Activated naive CD4-positive, alpha-beta T cell treated with anti-CD3 and anti-CD28 coated beads for 36 hours (primary cell): ENCODE measurements at regions of chrX and their contacts with region 1.

Region 1: DNA sequence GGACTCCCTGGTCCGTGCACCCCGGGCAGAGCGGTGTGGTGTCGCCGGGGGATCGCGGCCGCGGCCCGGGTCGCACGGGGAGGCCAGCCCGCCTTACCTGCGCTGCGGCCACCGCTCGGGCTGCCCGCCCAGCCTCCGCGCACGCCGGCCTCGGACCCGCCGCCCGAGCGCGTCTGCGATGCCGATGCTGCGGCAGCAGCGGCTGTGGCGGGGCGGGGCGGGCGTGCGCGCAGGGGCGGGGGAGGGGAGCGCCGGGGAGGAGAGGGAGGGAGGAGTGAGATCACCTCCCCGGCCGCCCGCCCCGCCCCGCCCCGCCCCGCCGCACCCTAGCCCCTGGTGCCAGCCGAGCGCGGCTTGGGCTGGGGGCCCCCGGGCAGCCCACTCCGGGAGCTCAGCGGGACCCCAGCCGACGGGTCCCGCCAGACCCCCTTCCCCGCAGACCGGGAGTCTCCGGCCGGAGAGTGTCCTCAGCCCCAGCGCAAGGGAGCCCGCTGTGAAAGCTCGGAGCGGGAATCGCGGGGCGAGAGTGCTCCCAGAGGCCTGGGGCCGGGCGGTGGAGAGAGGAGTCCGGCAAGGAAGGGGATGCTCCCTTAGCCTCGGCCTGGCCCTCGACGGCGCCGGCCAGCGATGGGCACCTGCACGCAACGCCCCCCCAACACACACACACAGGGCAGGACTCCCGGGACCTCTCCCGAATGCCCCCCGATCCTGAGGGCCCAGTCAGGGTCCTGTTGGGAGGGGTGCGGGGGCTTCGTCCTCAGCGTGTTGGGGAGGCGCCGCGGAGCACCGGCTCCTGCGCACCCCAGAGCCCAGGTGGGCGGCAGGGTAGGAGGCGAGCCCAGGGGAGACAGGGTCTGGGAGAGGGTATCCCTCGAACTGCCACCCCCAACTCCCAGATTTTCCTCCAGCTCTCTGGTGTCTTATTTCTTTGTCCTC is at the start of gene L1CAM:
- DNase-seq: peak; percentile 38
- H3K4me3 Mint-ChIP-seq: peak within 1 kb of the TSS; percentile 53
- H3K27ac Mint-ChIP-seq: no peak within 1 kb of the TSS
- H3K4me1 Mint-ChIP-seq: peaks cover 3% of the 10 kb centered on the region
- H3K27me3 Mint-ChIP-seq: peaks cover 8% of the 10 kb centered on the region
- total RNA-seq, gene L1CAM: 0.40 to 0.57 TPM

Region 2: GRCh38 chrX:153900831-153901752 is 14.9 kb after region 1 on chrX:
- CTCF ChIA-PET with region 1: no interaction called
- intact Hi-C with region 1: loop called (anchors 1 kb)
- DNase-seq: peak; percentile 82
- H3K4me3 Mint-ChIP-seq: peak overlapping the region; percentile 43
- H3K27ac Mint-ChIP-seq: peak overlapping the region; percentile 53
- H3K4me1 Mint-ChIP-seq: peaks cover 33% of the 10 kb centered on the region
- H3K27me3 Mint-ChIP-seq: no peaks in the 10 kb centered on the region

Region 3: GRCh38 chrX:154541724-154542467 is 655.7 kb after region 1 on chrX:
- CTCF ChIA-PET with region 1: no interaction called
- intact Hi-C with region 1: no loop called
- DNase-seq: peak; percentile 59
- H3K4me3 Mint-ChIP-seq: peak overlapping the region; percentile 74
- H3K27ac Mint-ChIP-seq: peak overlapping the region; percentile 94
- H3K4me1 Mint-ChIP-seq: peaks cover 46% of the 10 kb centered on the region
- H3K27me3 Mint-ChIP-seq: no peaks in the 10 kb centered on the region